Activated CD4-positive, alpha-beta T cell treated with anti-CD3 and anti-CD28 coated beads for 36 hours (primary cell): ENCODE measurements at regions of chr1 and their contacts with region 1.

Region 1: GRCh38 chr1:204806943-204807687 is 63.5 kb upstream of the NFASC start:
- DNase-seq: peak; percentile 92
- ATAC-seq: peak; percentile 96
- H3K4me3 Mint-ChIP-seq: peak overlapping the region; percentile 74
- H3K27ac Mint-ChIP-seq: peak overlapping the region; percentile 86
- H3K4me1 Mint-ChIP-seq: peaks cover 5% of the 10 kb centered on the region
- H3K27me3 Mint-ChIP-seq: no peaks in the 10 kb centered on the region

Region 2: GRCh38 chr1:204446370-204447111 is 360.6 kb before region 1 on chr1:
- CTCF ChIA-PET with region 1: interaction called, 13 read pairs
- POLR2A ChIA-PET with region 1: no interaction called
- intact Hi-C with region 1: loop called in 1 of 2 experiments (anchors 2 kb)
- DNase-seq: peak; percentile 86
- ATAC-seq: peak; percentile 82
- H3K4me3 Mint-ChIP-seq: no peak overlapping the region
- H3K27ac Mint-ChIP-seq: peak overlapping the region; percentile 86
- H3K4me1 Mint-ChIP-seq: peaks cover 49% of the 10 kb centered on the region
- H3K27me3 Mint-ChIP-seq: no peaks in the 10 kb centered on the region

Region 3: DNA sequence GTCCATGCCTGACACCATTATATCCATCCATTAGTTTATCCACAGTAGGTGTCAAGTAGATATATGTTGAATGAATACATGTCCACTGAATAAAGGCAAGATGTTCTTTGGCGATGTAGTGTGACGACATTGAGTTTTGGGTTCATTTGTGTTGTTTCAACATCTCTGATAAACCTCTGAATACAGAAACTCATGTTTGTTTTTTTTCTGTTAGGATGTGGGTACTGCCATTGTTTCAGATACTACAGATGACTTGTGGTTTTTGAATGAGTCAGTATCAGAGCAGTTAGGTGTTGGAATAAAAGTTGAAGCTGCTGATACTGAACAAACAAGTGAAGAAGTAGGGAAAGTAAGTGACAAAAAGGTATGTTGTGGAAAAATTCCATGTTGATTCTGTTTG is 262.8 kb before region 1 on chr1:
- CTCF ChIA-PET with region 1: interaction called, 13 read pairs
- POLR2A ChIA-PET with region 1: no interaction called
- intact Hi-C with region 1: no loop called
- DNase-seq: no peak
- ATAC-seq: peak; percentile 88
- H3K4me3 Mint-ChIP-seq: peak overlapping the region; percentile 37
- H3K27ac Mint-ChIP-seq: peak overlapping the region; percentile 69
- H3K4me1 Mint-ChIP-seq: peaks cover 56% of the 10 kb centered on the region
- H3K27me3 Mint-ChIP-seq: no peaks in the 10 kb centered on the region

Region 4: GRCh38 chr1:204623894-204624361 is 183.2 kb before region 1 on chr1:
- CTCF ChIA-PET with region 1: interaction called, 13 read pairs
- POLR2A ChIA-PET with region 1: no interaction called
- intact Hi-C with region 1: no loop called
- DNase-seq: peak; percentile 31
- ATAC-seq: no peak
- H3K4me3 Mint-ChIP-seq: no peak overlapping the region
- H3K27ac Mint-ChIP-seq: no peak overlapping the region
- H3K4me1 Mint-ChIP-seq: no peaks in the 10 kb centered on the region
- H3K27me3 Mint-ChIP-seq: no peaks in the 10 kb centered on the region

Region 5: GRCh38 chr1:204746838-204747442 is 60.2 kb before region 1 on chr1:
- CTCF ChIA-PET with region 1: interaction called, 24 read pairs
- POLR2A ChIA-PET with region 1: no interaction called
- intact Hi-C with region 1: no loop called
- DNase-seq: peak; percentile 70
- ATAC-seq: peak; percentile 85
- H3K4me3 Mint-ChIP-seq: no peak overlapping the region
- H3K27ac Mint-ChIP-seq: no peak overlapping the region
- H3K4me1 Mint-ChIP-seq: no peaks in the 10 kb centered on the region
- H3K27me3 Mint-ChIP-seq: peaks cover 6% of the 10 kb centered on the region

Region 6: GRCh38 chr1:204791453-204792353 is 15.4 kb before region 1 on chr1:
- CTCF ChIA-PET with region 1: interaction called, 206 read pairs
- POLR2A ChIA-PET with region 1: no interaction called
- intact Hi-C with region 1: loop called (anchors 1 kb)
- DNase-seq: peak; percentile 93
- ATAC-seq: peak; percentile 96
- H3K4me3 Mint-ChIP-seq: no peak overlapping the region
- H3K27ac Mint-ChIP-seq: no peak overlapping the region
- H3K4me1 Mint-ChIP-seq: peaks cover 2% of the 10 kb centered on the region
- H3K27me3 Mint-ChIP-seq: peaks cover 21% of the 10 kb centered on the region

Region 7: DNA sequence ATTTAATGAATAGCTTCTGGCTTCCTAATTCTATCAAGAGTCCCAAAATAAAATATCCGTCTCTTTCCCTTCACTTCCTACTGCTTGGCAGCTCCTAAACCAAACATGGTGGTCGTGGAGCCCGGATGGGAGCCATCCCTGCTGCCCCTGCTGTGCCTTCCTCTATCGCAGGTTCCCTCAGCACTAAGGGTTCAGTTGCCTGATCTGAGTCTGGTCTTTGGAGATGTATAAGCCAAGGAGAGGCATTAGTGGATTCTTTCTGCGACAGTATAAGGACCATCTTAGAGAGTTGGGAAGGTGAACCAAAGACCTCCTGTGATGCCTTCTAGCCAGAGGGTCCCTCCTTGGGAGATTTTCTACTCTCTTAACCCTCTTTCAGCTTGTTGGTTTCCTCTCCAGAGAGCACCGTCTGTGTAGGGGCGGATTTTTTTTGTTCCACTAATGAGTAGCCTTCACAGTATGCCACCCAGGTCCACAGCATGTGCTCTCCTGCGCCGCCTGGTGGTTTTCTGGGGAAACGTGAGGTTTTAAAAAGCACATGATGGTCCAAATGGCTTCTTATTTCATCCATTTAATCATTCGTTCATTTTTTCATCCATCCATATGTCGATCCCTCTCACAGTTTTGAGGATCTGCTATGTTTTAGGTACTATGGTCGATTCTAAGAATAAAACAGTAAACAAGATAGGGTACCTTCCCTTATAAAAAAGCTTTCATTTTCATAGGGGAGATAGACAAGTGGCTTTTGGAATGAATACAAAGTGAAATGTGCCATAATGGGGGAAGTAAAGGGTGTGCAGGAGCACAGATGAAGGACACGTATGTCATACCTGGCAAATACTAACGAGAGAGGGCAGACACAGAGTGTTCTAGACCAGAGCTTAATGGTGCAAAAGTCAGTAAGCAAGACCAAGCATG is 134.6 kb after region 1 on chr1:
- CTCF ChIA-PET with region 1: interaction called, 8 read pairs
- POLR2A ChIA-PET with region 1: interaction called, 7 read pairs
- intact Hi-C with region 1: loop called in 1 of 2 experiments (anchors 1 kb)
- DNase-seq: peak; percentile 82
- ATAC-seq: peak; percentile 74
- H3K4me3 Mint-ChIP-seq: no peak overlapping the region
- H3K27ac Mint-ChIP-seq: no peak overlapping the region
- H3K4me1 Mint-ChIP-seq: no peaks in the 10 kb centered on the region
- H3K27me3 Mint-ChIP-seq: peaks cover 5% of the 10 kb centered on the region

Region 8: GRCh38 chr1:205680073-205680851 is 873.1 kb after region 1 on chr1 and contains the start of gene SLC45A3:
- CTCF ChIA-PET with region 1: no interaction called
- POLR2A ChIA-PET with region 1: no interaction called
- intact Hi-C with region 1: no loop called
- DNase-seq: peak; percentile 51
- ATAC-seq: peak; percentile 79
- H3K4me3 Mint-ChIP-seq: peak within 1 kb of the TSS; percentile 66
- H3K27ac Mint-ChIP-seq: no peak within 1 kb of the TSS
- H3K4me1 Mint-ChIP-seq: peaks cover 8% of the 10 kb centered on the region
- H3K27me3 Mint-ChIP-seq: peaks cover 17% of the 10 kb centered on the region
- total RNA-seq, gene SLC45A3: 0.32 to 0.53 TPM